Activated CD4-positive, alpha-beta T cell treated with anti-CD3 and anti-CD28 coated beads for 36 hours (primary cell): ENCODE measurements at regions of chr2 and their contacts with region 1.

Region 1: DNA sequence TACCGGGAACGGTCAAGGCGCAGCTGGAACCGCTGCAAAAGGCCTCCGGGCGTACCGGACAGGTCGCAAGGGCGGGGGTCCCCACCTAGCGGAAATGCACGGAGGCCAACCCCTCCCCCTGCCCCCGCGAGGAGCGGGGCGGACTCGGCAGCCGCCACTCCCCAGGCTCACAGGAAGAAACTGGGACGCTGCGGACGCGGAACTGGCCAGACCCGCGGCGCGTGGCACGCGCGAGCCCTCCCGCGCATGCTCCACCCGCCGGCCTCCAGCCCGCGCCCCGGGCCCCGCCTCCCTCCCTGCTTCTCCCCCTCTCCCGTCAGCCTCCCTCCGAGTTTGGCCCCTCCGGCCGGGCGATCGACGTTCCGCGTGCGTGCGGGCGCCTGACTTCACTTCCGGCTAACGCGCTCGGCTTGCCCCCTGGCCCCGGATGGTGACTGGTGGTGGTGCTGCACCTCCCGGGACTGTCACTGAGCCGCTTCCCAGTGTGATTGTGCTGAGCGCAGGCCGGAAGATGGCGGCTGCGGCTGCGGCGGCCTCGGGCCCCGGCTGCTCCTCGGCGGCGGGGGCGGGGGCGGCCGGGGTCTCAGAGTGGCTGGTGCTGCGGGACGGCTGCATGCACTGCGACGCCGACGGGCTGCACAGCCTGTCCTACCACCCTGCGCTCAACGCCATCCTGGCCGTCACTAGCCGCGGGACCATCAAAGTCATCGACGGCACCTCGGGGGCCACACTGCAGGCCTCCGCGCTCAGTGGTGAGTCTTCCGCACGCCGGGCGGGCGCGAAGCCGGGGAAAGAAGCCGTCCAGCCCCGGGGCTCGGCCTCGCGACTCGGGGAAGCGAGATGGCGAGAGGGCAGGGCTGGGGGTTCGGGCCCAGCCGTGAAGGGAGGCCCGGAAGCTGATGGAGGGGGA is at the start of gene BIRC6:
- DNase-seq: peak; percentile 98
- ATAC-seq: peak; percentile 94
- H3K4me3 Mint-ChIP-seq: peak within 1 kb of the TSS; percentile 78
- H3K27ac Mint-ChIP-seq: peak within 1 kb of the TSS; percentile 93
- H3K4me1 Mint-ChIP-seq: peaks cover 37% of the 10 kb centered on the region
- H3K27me3 Mint-ChIP-seq: no peaks in the 10 kb centered on the region
- total RNA-seq, gene BIRC6: 66.1 to 70.1 TPM

Region 2: DNA sequence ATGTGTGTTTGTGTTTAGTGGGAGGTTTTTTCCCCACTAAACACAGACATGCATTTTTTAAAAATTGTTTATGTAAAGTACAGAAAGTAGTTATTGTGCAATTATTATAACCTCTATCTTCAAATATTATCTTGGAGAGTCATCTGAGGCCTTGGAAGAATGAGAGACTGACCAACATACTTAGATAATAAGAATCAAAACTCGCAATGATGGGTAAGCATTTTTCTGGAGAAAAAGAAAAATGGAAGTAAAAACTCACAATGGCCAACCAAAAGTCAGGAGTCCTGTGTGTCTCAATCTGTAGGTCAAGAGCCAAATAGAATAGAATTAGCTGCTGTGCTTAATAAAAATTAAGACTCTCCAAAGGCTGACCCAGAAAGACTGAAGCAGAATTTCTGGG is 389.2 kb before region 1 on chr2:
- CTCF ChIA-PET with region 1: no interaction called
- POLR2A ChIA-PET with region 1: no interaction called
- intact Hi-C with region 1: no loop called
- DNase-seq: no peak
- ATAC-seq: no peak
- H3K4me3 Mint-ChIP-seq: no peak overlapping the region
- H3K27ac Mint-ChIP-seq: no peak overlapping the region
- H3K4me1 Mint-ChIP-seq: peaks cover 22% of the 10 kb centered on the region
- H3K27me3 Mint-ChIP-seq: no peaks in the 10 kb centered on the region

Region 3: DNA sequence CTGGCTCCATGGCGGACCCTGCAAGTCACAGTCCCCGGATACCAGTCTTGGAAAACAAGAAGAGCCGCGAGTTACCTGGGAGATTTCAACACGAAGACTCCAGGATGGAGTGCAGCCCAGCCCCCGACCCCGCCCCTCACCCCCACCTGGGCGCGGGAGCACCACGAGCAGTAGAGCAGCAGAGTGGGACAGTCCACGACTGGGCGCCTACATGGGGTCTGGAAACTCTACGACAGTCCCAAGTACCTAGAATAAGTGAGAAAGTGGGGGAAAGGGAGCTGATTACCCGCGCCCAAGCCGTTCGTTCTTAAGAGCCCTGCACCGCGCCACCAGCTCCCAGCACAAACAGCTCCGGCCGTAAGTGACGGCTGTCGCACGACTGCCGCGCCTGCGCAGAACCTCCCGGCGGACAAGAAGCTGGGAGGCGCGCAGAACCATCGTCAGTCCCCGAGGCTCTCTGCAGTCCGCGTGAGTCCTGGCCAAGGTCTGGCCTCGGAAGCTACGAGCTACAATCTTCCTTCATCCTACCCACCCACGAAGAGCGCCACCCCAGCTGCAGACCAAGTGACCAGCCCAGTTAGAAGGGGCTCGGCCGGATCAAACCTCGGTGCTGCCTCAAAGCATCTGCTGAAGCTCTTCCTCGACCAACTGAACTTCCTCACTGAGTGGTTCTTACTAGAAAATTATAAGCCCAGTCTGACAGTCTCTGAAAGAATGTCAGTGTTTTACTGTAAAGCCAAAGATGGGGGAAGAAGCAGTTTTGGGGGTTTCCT is 317.4 kb before region 1 on chr2 and contains the start of gene DPY30:
- CTCF ChIA-PET with region 1: no interaction called
- POLR2A ChIA-PET with region 1: no interaction called
- intact Hi-C with region 1: loop called in 1 of 2 experiments (anchors 1 kb)
- DNase-seq: peak; percentile 95
- ATAC-seq: peak; percentile 94
- H3K4me3 Mint-ChIP-seq: peak within 1 kb of the TSS; percentile 90
- H3K27ac Mint-ChIP-seq: peak within 1 kb of the TSS; percentile 96
- H3K4me1 Mint-ChIP-seq: peaks cover 11% of the 10 kb centered on the region
- H3K27me3 Mint-ChIP-seq: no peaks in the 10 kb centered on the region
- total RNA-seq, gene DPY30: 74.2 to 78.6 TPM

Region 4: DNA sequence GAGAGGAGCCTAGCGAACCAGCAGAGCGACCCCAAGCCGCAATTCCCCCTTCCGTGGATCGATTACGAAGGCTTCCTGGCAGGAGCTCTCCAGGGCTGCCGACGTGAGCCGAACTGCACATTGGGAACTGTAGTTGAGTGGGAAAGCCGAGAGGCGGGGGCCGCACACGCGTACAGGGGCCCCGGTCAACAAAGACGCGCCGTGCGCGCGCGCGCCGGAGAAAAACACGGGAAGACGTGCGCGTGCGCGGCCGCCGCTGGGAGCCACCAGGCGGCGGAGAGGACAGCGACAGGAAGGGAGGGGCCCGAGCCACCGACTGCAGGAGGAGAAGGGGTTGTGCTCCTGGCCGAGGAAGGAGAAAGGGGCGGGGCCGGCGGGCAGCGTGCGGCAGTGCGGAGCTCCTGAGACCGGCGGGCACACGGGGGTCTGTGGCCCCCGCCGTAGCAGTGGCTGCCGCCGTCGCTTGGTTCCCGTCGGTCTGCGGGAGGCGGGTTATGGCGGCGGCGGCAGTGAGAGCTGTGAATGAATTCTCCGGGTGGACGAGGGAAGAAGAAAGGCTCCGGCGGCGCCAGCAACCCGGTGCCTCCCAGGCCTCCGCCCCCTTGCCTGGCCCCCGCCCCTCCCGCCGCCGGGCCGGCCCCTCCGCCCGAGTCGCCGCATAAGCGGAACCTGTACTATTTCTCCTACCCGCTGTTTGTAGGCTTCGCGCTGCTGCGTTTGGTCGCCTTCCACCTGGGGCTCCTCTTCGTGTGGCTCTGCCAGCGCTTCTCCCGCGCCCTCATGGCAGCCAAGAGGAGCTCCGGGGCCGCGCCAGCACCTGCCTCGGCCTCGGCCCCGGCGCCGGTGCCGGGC is 293.5 kb before region 1 on chr2 and contains the start of gene SPAST:
- CTCF ChIA-PET with region 1: no interaction called
- POLR2A ChIA-PET with region 1: no interaction called
- intact Hi-C with region 1: loop called in 1 of 2 experiments (anchors 1 kb)
- DNase-seq: peak; percentile 98
- ATAC-seq: peak; percentile 95
- H3K4me3 Mint-ChIP-seq: peak within 1 kb of the TSS; percentile 97
- H3K27ac Mint-ChIP-seq: peak within 1 kb of the TSS; percentile 94
- H3K4me1 Mint-ChIP-seq: peaks cover 23% of the 10 kb centered on the region
- H3K27me3 Mint-ChIP-seq: no peaks in the 10 kb centered on the region
- total RNA-seq, gene SPAST: 16.8 to 19.5 TPM

Region 5: GRCh38 chr2:32168513-32168912 is 188.5 kb before region 1 on chr2:
- CTCF ChIA-PET with region 1: no interaction called
- POLR2A ChIA-PET with region 1: interaction called, 5 read pairs
- intact Hi-C with region 1: loop called (anchors 1 to 2 kb)
- DNase-seq: no peak
- ATAC-seq: no peak
- H3K4me3 Mint-ChIP-seq: no peak overlapping the region
- H3K27ac Mint-ChIP-seq: peak overlapping the region; percentile 38
- H3K4me1 Mint-ChIP-seq: peaks cover 39% of the 10 kb centered on the region
- H3K27me3 Mint-ChIP-seq: no peaks in the 10 kb centered on the region

Region 6: DNA sequence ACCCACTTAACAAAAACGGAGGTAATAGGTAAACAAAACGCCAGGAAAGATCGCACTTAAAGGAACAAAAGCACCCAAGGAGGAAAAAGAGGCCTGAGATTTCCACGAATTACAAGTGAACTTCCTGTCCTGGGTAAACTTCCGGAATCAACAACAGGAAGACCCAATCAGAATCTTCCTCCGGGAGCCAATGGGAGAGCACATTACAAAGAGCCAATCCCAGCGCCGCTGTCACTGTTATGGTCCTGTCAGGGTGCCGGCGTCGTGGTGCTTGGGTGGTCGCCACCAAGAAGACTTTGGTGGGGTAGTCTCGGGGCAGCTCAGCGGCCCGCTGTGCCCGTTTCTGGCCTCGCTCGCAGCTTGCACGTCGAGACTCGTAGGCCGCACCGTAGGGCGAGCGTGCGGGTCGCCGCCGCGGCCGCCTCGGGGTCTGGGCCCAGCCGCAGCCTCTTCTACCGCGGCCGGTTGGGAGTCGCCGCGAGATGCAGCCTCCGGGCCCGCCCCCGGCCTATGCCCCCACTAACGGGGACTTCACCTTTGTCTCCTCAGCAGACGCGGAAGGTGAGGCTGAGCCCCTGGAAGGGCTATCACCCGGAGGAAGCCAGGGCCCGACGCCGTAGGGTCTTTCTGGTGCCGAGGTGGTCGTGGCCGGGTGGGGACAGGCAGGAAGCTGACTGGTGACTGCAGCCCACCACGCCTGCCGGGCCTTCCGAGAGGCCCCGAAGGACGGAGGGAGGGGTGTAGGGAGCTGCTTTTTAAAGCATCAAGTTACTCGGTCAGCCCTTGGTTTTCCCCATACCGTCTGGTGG is 79.1 kb before region 1 on chr2 and contains the start of gene YIPF4:
- CTCF ChIA-PET with region 1: interaction called, 3 read pairs
- POLR2A ChIA-PET with region 1: no interaction called
- intact Hi-C with region 1: loop called (anchors 1 to 5 kb)
- DNase-seq: peak; percentile 89
- ATAC-seq: peak; percentile 99
- H3K4me3 Mint-ChIP-seq: peak within 1 kb of the TSS; percentile 94
- H3K27ac Mint-ChIP-seq: peak within 1 kb of the TSS; percentile 93
- H3K4me1 Mint-ChIP-seq: peaks cover 24% of the 10 kb centered on the region
- H3K27me3 Mint-ChIP-seq: no peaks in the 10 kb centered on the region
- total RNA-seq, gene YIPF4: 17.5 to 37.6 TPM

Region 7: GRCh38 chr2:32436150-32436549 is 79.2 kb after region 1 on chr2:
- CTCF ChIA-PET with region 1: no interaction called
- POLR2A ChIA-PET with region 1: no interaction called
- intact Hi-C with region 1: no loop called
- DNase-seq: no peak
- ATAC-seq: peak; percentile 42
- H3K4me3 Mint-ChIP-seq: no peak overlapping the region
- H3K27ac Mint-ChIP-seq: peak overlapping the region; percentile 63
- H3K4me1 Mint-ChIP-seq: peaks cover 3% of the 10 kb centered on the region
- H3K27me3 Mint-ChIP-seq: no peaks in the 10 kb centered on the region

Region 8: GRCh38 chr2:32946314-32947075 is 589.5 kb after region 1 on chr2 and contains the start of gene LTBP1:
- CTCF ChIA-PET with region 1: no interaction called
- POLR2A ChIA-PET with region 1: no interaction called
- intact Hi-C with region 1: loop called in 1 of 2 experiments (anchors 5 kb)
- DNase-seq: peak; percentile 78
- ATAC-seq: peak; percentile 81
- H3K4me3 Mint-ChIP-seq: peak within 1 kb of the TSS; percentile 67
- H3K27ac Mint-ChIP-seq: no peak within 1 kb of the TSS
- H3K4me1 Mint-ChIP-seq: no peaks in the 10 kb centered on the region
- H3K27me3 Mint-ChIP-seq: peaks cover 23% of the 10 kb centered on the region
- total RNA-seq, gene LTBP1: 0.14 to 0.26 TPM

Region 9: DNA sequence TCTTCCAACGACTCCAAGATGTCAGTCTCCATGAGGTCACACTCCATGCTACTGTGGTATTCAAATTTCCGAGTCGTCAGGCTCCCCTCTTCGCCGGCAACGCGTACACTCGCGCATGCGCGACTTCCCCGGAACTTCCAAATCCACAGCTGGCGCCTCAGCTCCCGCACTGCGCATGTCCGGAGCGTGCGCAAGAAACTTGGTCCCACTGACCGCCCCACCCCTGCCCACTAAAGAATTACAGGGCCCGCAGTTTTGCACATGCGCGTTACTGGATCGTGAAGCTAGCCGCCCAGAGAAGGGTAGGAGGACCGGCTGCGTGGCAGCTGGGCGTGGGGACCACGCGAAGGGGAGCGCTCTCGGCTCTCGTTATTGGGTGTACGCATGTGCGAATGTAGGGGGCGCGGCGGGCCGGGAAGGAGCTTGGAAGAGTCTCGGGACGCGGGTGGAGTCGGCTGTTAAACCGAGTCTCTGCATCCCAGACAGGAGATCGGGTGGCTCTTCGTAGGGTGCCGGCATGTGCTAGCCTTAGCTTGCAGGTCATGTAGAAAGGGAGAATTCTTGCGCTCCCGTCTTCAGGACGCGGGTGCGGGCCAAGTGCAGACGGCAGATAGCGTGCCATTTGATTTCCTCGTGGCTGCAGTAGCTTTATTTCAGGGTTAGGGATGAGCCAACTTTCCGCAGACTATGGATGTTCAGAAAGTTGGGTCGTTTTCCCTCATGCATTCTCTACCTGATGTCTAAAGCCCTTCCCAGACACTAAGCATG is 1242.4 kb after region 1 on chr2 and contains the start of gene FAM98A:
- CTCF ChIA-PET with region 1: no interaction called
- POLR2A ChIA-PET with region 1: no interaction called
- intact Hi-C with region 1: loop called (anchors 1 to 10 kb)
- DNase-seq: peak; percentile 99
- ATAC-seq: peak; percentile 91
- H3K4me3 Mint-ChIP-seq: peak within 1 kb of the TSS; percentile 88
- H3K27ac Mint-ChIP-seq: peak within 1 kb of the TSS; percentile 93
- H3K4me1 Mint-ChIP-seq: peaks cover 24% of the 10 kb centered on the region
- H3K27me3 Mint-ChIP-seq: no peaks in the 10 kb centered on the region
- total RNA-seq, gene FAM98A: 42.9 to 61.5 TPM